CD4-positive, alpha-beta memory T cell (primary cell): ENCODE measurements at regions of chr2 and their contacts with region 1.

Region 1: GRCh38 chr2:134668821-134669220 is 50.0 kb downstream of the TMEM163 start:
- DNase-seq: peak; percentile 82 to 96 (median 87)
- H3K4me3 ChIP-seq: peak overlapping the region in 1 of 2 donors; percentile 11
- H3K4me3 Mint-ChIP-seq: peak overlapping the region; percentile 45 to 77 (median 60)
- H3K27ac ChIP-seq: peak overlapping the region; percentile 59
- H3K27ac Mint-ChIP-seq: peak overlapping the region; percentile 84 to 99 (median 93)
- H3K4me1 ChIP-seq: peaks cover 77% of the 10 kb centered on the region
- H3K4me1 Mint-ChIP-seq: peaks cover 65 to 97% (median 86%) of the 10 kb centered on the region in 4 donors
- H3K27me3 ChIP-seq: no peaks in the 10 kb centered on the region
- H3K27me3 Mint-ChIP-seq: peaks cover 0 to 1% of the 10 kb centered on the region in 2 donors

Region 2: DNA sequence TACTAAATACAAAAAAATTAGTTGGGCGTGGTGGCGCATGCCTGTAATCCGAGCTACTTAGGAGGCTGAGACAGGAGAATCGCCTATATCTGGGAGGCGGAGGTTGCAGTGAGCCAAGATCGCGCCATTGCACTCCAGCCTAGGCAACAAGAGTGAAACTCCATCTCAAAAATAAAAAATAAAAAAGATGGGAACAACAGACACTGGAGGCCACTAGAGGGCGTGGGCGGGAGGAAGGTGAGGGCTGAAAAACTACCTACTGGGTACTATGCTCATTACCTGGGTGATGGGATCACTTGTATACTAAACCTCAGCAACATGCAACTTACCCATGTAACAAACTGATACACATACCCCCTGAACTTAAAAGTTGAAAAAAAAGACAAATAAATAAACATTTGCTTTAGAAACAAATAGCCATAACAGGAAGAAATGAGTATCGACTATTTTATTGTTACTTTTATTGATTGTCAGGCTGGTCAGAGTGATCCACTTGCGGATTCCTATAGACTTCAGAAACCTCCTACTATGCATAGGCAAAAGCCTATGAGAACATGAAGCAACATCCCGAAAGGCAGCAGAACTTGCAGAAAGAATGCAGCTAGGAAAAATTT is 11.1 kb before region 1 on chr2:
- CTCF ChIA-PET with region 1: interaction called, 14 read pairs
- POLR2A ChIA-PET with region 1: interaction called, 6 read pairs
- intact Hi-C with region 1: no loop called
- DNase-seq: peak in 4 of 5 donors; percentile 30 to 46 (median 44)
- H3K4me3 ChIP-seq: no peak overlapping the region
- H3K4me3 Mint-ChIP-seq: no peak overlapping the region
- H3K27ac ChIP-seq: no peak overlapping the region
- H3K27ac Mint-ChIP-seq: peak overlapping the region in 1 of 7 donors; percentile 37
- H3K4me1 ChIP-seq: no peaks in the 10 kb centered on the region
- H3K4me1 Mint-ChIP-seq: peaks cover 16 to 34% (median 19%) of the 10 kb centered on the region in 4 donors
- H3K27me3 ChIP-seq: no peaks in the 10 kb centered on the region
- H3K27me3 Mint-ChIP-seq: peaks cover 2 to 3% of the 10 kb centered on the region in 2 donors

Region 3: GRCh38 chr2:134692499-134692898 is 23.7 kb after region 1 on chr2:
- CTCF ChIA-PET with region 1: interaction called, 3 read pairs
- POLR2A ChIA-PET with region 1: no interaction called
- intact Hi-C with region 1: loop called (anchors 2 kb)
- DNase-seq: peak in 3 of 5 donors; percentile 21 to 30 (median 24)
- H3K4me3 ChIP-seq: no peak overlapping the region
- H3K4me3 Mint-ChIP-seq: no peak overlapping the region
- H3K27ac ChIP-seq: no peak overlapping the region
- H3K27ac Mint-ChIP-seq: no peak overlapping the region
- H3K4me1 ChIP-seq: peaks cover 5% of the 10 kb centered on the region
- H3K4me1 Mint-ChIP-seq: no peaks in the 10 kb centered on the region
- H3K27me3 ChIP-seq: no peaks in the 10 kb centered on the region
- H3K27me3 Mint-ChIP-seq: peaks cover 2 to 3% of the 10 kb centered on the region in 2 donors

Region 4: GRCh38 chr2:134918526-134919340 is 249.9 kb after region 1 on chr2 and contains the start of gene CCNT2:
- CTCF ChIA-PET with region 1: no interaction called
- POLR2A ChIA-PET with region 1: interaction called, 5 read pairs
- intact Hi-C with region 1: loop called (anchors 1 kb)
- DNase-seq: peak; percentile 99 to 100 (median 100)
- H3K4me3 ChIP-seq: peak within 1 kb of the TSS; percentile 68 to 94
- H3K4me3 Mint-ChIP-seq: peak within 1 kb of the TSS; percentile 90 to 99 (median 97)
- H3K27ac ChIP-seq: peak within 1 kb of the TSS; percentile 95
- H3K27ac Mint-ChIP-seq: peak within 1 kb of the TSS; percentile 93 to 99 (median 98)
- H3K4me1 ChIP-seq: peaks cover 52% of the 10 kb centered on the region
- H3K4me1 Mint-ChIP-seq: peaks cover 22 to 61% (median 43%) of the 10 kb centered on the region in 4 donors
- H3K27me3 ChIP-seq: no peaks in the 10 kb centered on the region
- H3K27me3 Mint-ChIP-seq: peaks cover 0 to 4% of the 10 kb centered on the region in 2 donors
- total RNA-seq, gene CCNT2: 75.4 to 80.6 TPM

Region 5: DNA sequence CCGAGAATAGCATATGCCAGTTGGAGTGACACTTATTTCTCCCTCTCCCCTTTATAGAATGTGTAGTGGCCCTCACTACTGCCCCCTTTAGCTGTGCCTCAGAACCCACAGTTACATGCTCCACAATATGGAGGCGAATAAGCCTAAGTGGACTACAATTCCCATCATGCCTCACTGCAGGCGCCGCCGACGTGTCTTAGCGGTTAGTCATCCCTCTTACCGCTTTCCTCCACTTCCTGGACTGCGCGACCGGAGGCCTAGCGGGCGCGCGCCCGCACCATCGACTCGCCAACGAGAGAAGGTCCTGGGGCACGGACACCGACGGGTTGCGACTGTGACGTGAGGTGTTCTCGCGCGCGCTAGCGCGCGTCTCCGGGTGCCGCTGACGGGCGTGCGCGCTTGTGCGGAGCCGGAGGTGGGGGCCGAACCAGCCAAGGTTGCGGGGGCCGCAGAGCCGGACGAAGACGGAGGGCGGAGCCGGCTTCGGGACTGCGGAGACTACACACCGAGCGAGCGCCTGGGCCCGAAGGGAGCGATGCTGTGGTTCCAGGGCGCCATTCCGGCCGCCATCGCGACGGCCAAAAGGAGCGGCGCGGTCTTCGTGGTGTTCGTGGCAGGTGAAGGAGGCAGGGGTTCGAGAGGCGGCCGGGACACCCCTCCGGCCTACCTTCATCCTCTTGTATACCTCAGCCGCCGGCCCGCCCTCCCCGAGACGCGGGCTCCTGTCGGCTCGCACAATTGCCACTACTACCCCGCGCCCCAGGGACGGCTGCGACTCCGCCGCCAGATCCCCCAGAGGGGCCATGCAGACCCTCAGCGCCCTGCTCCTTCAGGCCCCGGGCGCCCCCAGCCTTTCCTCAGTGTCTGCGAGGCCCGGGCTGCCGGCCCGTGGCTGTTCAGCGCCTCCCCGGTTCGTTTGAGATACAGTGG is 1072.8 kb after region 1 on chr2 and contains the start of gene UBXN4:
- CTCF ChIA-PET with region 1: no interaction called
- POLR2A ChIA-PET with region 1: interaction called, 3 read pairs
- intact Hi-C with region 1: loop called (anchors 10 kb)
- DNase-seq: peak; percentile 88 to 97 (median 91)
- H3K4me3 ChIP-seq: peak within 1 kb of the TSS; percentile 53 to 80
- H3K4me3 Mint-ChIP-seq: peak within 1 kb of the TSS; percentile 94 to 99 (median 97)
- H3K27ac ChIP-seq: peak within 1 kb of the TSS; percentile 97
- H3K27ac Mint-ChIP-seq: peak within 1 kb of the TSS in 6 of 7 donors; percentile 96 to 99 (median 97)
- H3K4me1 ChIP-seq: peaks cover 40% of the 10 kb centered on the region
- H3K4me1 Mint-ChIP-seq: peaks cover 29 to 43% (median 37%) of the 10 kb centered on the region in 4 donors
- H3K27me3 ChIP-seq: no peaks in the 10 kb centered on the region
- H3K27me3 Mint-ChIP-seq: no peaks in the 10 kb centered on the region
- total RNA-seq, gene UBXN4: 116 to 121 TPM